ENCODE measurements at regions of chr1 and their contacts with region 1.

Region 1: GRCh38 chr1:10209905-10210810 is at the start of gene KIF1B:
- DNase-seq: peak; percentile 97
- H3K4me3 Mint-ChIP-seq: peak within 1 kb of the TSS; percentile 82
- H3K27ac Mint-ChIP-seq: peak within 1 kb of the TSS; percentile 60
- H3K4me1 Mint-ChIP-seq: peaks cover 33% of the 10 kb centered on the region
- H3K27me3 Mint-ChIP-seq: no peaks in the 10 kb centered on the region
- total RNA-seq, gene KIF1B: 16.8 to 17.4 TPM

Region 2: GRCh38 chr1:10193288-10193687 is 16.9 kb before region 1 on chr1:
- CTCF ChIA-PET with region 1: interaction called, 14 read pairs
- POLR2A ChIA-PET with region 1: interaction called, 4 read pairs
- intact Hi-C with region 1: no loop called
- DNase-seq: no peak
- H3K4me3 Mint-ChIP-seq: no peak overlapping the region
- H3K27ac Mint-ChIP-seq: no peak overlapping the region
- H3K4me1 Mint-ChIP-seq: no peaks in the 10 kb centered on the region
- H3K27me3 Mint-ChIP-seq: no peaks in the 10 kb centered on the region

Region 3: GRCh38 chr1:10236405-10237156 is 26.4 kb after region 1 on chr1:
- CTCF ChIA-PET with region 1: interaction called, 12 read pairs
- POLR2A ChIA-PET with region 1: no interaction called
- intact Hi-C with region 1: no loop called
- DNase-seq: no peak
- H3K4me3 Mint-ChIP-seq: no peak overlapping the region
- H3K27ac Mint-ChIP-seq: peak overlapping the region; percentile 15
- H3K4me1 Mint-ChIP-seq: peaks cover 17% of the 10 kb centered on the region
- H3K27me3 Mint-ChIP-seq: no peaks in the 10 kb centered on the region

Region 4: GRCh38 chr1:10324627-10325026 is 114.5 kb after region 1 on chr1:
- CTCF ChIA-PET with region 1: interaction called, 10 read pairs
- POLR2A ChIA-PET with region 1: no interaction called
- intact Hi-C with region 1: loop called (anchors 5 kb)
- DNase-seq: peak; percentile 46
- H3K4me3 Mint-ChIP-seq: peak overlapping the region; percentile 63
- H3K27ac Mint-ChIP-seq: peak overlapping the region; percentile 82
- H3K4me1 Mint-ChIP-seq: peaks cover 20% of the 10 kb centered on the region
- H3K27me3 Mint-ChIP-seq: no peaks in the 10 kb centered on the region

Region 5: DNA sequence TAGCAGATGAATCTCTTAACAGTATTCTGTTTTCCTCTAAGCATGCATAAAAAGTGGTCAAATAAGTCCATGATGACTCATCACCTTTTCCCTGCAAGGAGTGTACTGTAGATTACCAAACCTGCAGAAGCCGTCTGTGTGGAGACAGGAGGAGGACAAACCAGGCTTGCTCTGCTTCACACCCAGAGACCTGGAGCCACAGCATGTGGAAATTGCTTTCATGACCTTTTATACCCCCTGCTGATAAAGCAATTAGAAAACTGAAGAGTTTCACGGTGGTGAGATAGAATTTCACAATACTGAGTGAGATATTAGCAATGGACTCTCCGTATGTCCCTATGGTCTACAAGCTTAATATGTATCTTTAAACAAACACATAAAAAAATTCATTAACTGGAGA is 249.0 kb after region 1 on chr1:
- CTCF ChIA-PET with region 1: no interaction called
- POLR2A ChIA-PET with region 1: no interaction called
- intact Hi-C with region 1: no loop called
- DNase-seq: no peak
- H3K4me3 Mint-ChIP-seq: no peak overlapping the region
- H3K27ac Mint-ChIP-seq: no peak overlapping the region
- H3K4me1 Mint-ChIP-seq: peaks cover 2% of the 10 kb centered on the region
- H3K27me3 Mint-ChIP-seq: no peaks in the 10 kb centered on the region